ENCODE measurements at regions of chr2 and their contacts with region 1.

Region 1: GRCh38 chr2:224946895-224947294 is 95.4 kb downstream of the DOCK10 start:
- DNase-seq: no peak
- H3K4me3 Mint-ChIP-seq: peak overlapping the region; percentile 87
- H3K27ac Mint-ChIP-seq: peak overlapping the region; percentile 92
- H3K4me1 Mint-ChIP-seq: peaks cover 62% of the 10 kb centered on the region
- H3K27me3 Mint-ChIP-seq: no peaks in the 10 kb centered on the region

Region 2: DNA sequence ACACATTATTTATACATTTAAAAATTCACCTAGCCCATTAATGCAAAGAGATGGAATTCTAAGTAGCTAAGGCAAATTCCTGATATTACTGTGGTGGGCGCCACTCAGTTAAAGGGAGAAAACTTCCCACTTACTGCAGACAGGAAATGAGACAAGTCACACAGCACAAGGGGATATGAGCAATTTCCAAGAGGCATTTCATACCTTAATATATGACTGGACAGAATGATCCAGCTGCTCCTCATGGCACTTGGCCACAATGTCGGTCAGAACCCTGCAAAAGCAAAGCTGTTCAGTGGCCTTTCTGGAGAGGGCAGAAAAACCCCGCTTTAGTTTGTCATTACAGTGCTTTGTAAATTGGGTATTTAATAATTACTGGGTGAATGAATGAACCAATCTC is 109.3 kb before region 1 on chr2:
- CTCF ChIA-PET with region 1: no interaction called
- POLR2A ChIA-PET with region 1: no interaction called
- DNase-seq: no peak
- H3K4me3 Mint-ChIP-seq: no peak overlapping the region
- H3K27ac Mint-ChIP-seq: no peak overlapping the region
- H3K4me1 Mint-ChIP-seq: no peaks in the 10 kb centered on the region
- H3K27me3 Mint-ChIP-seq: no peaks in the 10 kb centered on the region

Region 3: DNA sequence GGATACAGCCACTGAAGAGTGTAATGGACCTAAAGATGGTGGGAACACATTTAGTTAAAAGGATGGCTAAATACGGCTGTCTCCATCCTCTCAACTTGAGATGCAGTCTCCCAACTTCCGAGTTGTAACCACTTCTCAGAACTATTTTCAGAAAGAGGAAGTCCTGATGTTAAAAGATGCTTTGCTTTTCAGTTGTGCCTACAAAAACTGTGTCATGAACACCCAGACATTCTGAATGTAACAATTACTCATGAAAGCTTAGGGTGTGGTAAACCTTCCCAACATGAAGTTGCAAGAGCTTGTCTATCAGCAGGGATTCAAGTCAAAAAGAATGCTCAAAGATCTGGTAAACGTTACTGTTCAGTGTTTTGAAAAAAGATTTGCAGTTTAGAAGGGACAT is 52.5 kb before region 1 on chr2:
- CTCF ChIA-PET with region 1: no interaction called
- POLR2A ChIA-PET with region 1: interaction called, 13 read pairs
- DNase-seq: no peak
- H3K4me3 Mint-ChIP-seq: peak overlapping the region; percentile 58
- H3K27ac Mint-ChIP-seq: peak overlapping the region; percentile 96
- H3K4me1 Mint-ChIP-seq: peaks cover 58% of the 10 kb centered on the region
- H3K27me3 Mint-ChIP-seq: no peaks in the 10 kb centered on the region

Region 4: DNA sequence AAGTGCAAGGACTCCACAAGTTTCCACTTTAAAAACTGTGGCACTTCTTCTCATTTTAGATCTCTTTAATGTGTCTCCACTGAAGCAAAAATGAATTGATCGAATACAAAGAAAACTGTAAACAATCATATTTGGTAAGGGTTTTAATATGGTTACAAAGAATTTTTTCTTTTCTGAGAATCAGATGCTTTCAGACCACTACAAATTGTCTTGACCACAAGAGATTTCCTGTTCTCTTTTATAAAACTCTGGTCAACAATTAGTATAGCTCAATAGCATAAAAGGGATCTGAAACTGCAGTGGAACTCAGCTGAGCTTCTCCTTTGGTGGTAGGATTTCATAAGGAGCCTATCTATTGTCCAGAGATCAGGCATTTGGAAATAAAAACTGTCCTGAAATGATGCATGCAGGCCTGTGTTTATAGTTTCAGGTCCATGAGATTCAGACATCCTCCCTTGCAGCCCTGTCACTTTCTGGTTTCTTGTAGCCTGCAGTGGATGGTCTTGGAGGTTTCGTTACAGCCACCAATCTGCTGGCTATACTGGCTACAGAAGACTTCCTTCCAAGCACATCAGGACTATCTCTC is 24.7 kb before region 1 on chr2:
- CTCF ChIA-PET with region 1: interaction called, 13 read pairs
- POLR2A ChIA-PET with region 1: interaction called, 546 read pairs
- DNase-seq: no peak
- H3K4me3 Mint-ChIP-seq: peak overlapping the region; percentile 14
- H3K27ac Mint-ChIP-seq: peak overlapping the region; percentile 92
- H3K4me1 Mint-ChIP-seq: peaks cover 60% of the 10 kb centered on the region
- H3K27me3 Mint-ChIP-seq: no peaks in the 10 kb centered on the region

Region 5: DNA sequence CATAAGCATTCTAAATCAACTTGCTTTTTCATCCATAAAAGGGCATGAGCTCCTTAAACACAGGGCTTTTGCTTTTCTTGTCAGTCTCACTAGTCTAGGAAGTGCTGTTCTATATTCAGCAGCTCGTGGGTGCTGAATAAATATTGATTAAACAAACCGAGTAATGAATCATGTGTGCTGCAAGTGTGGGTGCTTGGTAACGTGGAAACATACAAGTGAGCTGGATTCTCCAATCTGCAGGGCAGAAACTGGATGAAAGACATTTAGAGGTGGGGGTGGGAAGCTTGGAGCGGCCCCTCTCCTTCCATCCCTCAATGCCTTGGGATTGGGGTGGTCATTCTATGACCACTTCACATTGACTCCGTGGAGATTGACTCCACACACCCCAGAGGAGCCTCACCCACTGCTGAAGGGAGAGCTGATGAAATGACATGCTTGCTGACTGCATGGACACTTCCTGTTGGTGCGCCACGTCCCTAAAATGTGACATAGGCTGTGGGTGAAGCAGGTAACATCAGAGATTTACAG is 19.2 kb before region 1 on chr2:
- CTCF ChIA-PET with region 1: interaction called, 13 read pairs
- POLR2A ChIA-PET with region 1: interaction called, 546 read pairs
- DNase-seq: peak; percentile 83
- H3K4me3 Mint-ChIP-seq: peak overlapping the region; percentile 46
- H3K27ac Mint-ChIP-seq: peak overlapping the region; percentile 92
- H3K4me1 Mint-ChIP-seq: peaks cover 99% of the 10 kb centered on the region
- H3K27me3 Mint-ChIP-seq: no peaks in the 10 kb centered on the region

Region 6: GRCh38 chr2:224982910-224983711 is 36.2 kb after region 1 on chr2:
- CTCF ChIA-PET with region 1: interaction called, 3 read pairs
- POLR2A ChIA-PET with region 1: interaction called, 69 read pairs
- DNase-seq: peak; percentile 57
- H3K4me3 Mint-ChIP-seq: peak overlapping the region; percentile 22
- H3K27ac Mint-ChIP-seq: peak overlapping the region; percentile 85
- H3K4me1 Mint-ChIP-seq: peaks cover 69% of the 10 kb centered on the region
- H3K27me3 Mint-ChIP-seq: no peaks in the 10 kb centered on the region

Region 7: DNA sequence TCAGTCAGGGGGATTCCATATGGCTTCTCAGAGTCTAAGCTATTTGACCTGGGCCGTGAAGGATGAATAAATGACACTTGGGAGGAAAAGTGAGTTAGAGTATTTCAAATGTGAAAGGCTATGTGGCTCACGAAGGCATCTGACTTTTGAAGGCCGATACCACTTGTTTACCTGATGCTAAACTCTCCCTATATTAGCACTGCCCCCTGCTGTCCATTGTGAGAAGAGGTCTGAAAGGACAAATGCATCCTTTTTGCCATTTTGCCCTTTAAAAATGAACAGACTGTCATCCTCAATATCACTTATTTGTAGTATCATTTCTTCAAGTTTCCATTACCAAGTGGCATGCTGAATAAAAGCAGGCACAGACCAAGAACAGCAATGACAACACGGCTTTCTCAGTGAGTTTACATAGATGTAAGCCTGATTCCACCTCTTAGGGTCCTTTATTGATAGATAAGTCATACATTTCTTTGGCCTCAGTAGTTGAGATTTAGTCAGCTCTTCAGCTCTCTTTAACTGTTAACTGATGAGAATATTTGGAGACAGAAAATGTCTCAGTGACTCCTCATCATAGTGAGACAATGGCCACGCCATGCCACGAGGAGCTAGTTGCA is 55.3 kb after region 1 on chr2:
- CTCF ChIA-PET with region 1: interaction called, 22 read pairs
- POLR2A ChIA-PET with region 1: interaction called, 16 read pairs
- DNase-seq: peak; percentile 69
- H3K4me3 Mint-ChIP-seq: no peak overlapping the region
- H3K27ac Mint-ChIP-seq: peak overlapping the region; percentile 44
- H3K4me1 Mint-ChIP-seq: peaks cover 66% of the 10 kb centered on the region
- H3K27me3 Mint-ChIP-seq: no peaks in the 10 kb centered on the region

Region 8: GRCh38 chr2:225041851-225042799 is 95.2 kb after region 1 on chr2 and contains the start of gene DOCK10:
- CTCF ChIA-PET with region 1: no interaction called
- POLR2A ChIA-PET with region 1: interaction called, 51 read pairs
- DNase-seq: peak; percentile 55
- H3K4me3 Mint-ChIP-seq: peak within 1 kb of the TSS; percentile 99
- H3K27ac Mint-ChIP-seq: peak within 1 kb of the TSS; percentile 98
- H3K4me1 Mint-ChIP-seq: peaks cover 49% of the 10 kb centered on the region
- H3K27me3 Mint-ChIP-seq: peaks cover 33% of the 10 kb centered on the region
- total RNA-seq, gene DOCK10: 223 to 239 TPM